Ascending aorta (tissue), 2 donors: ENCODE measurements at regions of chr16 and their contacts with region 1.

Region 1: DNA sequence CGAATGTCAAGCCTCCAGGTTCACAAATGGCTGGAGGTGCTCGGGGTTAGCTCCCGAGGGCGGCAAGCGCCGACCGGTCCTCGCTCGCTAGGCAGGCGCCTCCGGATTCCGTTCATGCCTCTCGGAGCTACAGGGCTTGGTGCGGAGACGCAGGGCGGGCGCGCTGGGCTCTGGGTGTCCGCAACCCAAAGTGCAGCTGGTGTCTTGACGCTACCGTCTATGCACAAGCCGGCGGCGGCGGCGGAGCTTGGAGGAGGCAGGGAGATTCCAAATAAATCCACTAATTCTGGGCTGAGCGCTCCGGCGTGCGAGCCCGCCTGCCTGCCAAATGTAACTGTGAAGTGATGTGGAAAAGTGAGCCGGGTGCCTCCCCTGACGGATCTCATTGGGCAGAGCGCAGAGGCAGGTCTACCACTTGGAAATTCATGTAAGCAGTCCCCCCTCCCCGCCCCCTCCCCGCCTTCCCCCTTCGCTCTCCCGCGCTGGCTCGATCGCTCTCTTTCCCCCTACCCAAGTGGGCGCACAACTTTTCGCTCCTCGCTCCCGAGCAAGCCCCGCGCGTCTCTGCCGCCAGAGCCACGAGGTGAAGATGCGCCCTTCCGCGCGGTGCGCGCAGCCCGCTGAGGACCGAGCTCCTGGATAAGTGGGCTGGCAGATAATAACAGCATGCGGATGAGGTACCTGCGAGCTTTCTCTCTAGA is at the start of gene CDH8:
- DNase-seq: peak in 1 of 2 donors; percentile 63
- H3K4me3 ChIP-seq: peak within 1 kb of the TSS; percentile 26 to 79
- H3K27ac ChIP-seq: peak within 1 kb of the TSS in 1 of 2 donors; percentile 9
- H3K4me1 ChIP-seq: peaks cover 0 to 4% of the 10 kb centered on the region in 2 donors
- H3K27me3 ChIP-seq: no peaks in the 10 kb centered on the region
- CTCF ChIP-seq: no peak
- total RNA-seq, gene CDH8: not detected

Region 2: GRCh38 chr16:61792194-61792909 is 243.9 kb before region 1 on chr16:
- intact Hi-C with region 1: loop called (anchors 10 kb)
- DNase-seq: no peak
- H3K4me3 ChIP-seq: no peak overlapping the region
- H3K27ac ChIP-seq: peak overlapping the region; percentile 30 to 61
- H3K4me1 ChIP-seq: peaks cover 0 to 14% of the 10 kb centered on the region in 2 donors
- H3K27me3 ChIP-seq: no peaks in the 10 kb centered on the region
- CTCF ChIP-seq: no peak

Region 3: GRCh38 chr16:61946019-61946418 is 90.2 kb before region 1 on chr16:
- intact Hi-C with region 1: loop called (anchors 10 kb)
- DNase-seq: no peak
- H3K4me3 ChIP-seq: no peak overlapping the region
- H3K27ac ChIP-seq: no peak overlapping the region
- H3K4me1 ChIP-seq: no peaks in the 10 kb centered on the region
- H3K27me3 ChIP-seq: no peaks in the 10 kb centered on the region
- CTCF ChIP-seq: no peak